Panc1 (cell line): ENCODE measurements at regions of chr20 and their contacts with region 1.

Region 1: DNA sequence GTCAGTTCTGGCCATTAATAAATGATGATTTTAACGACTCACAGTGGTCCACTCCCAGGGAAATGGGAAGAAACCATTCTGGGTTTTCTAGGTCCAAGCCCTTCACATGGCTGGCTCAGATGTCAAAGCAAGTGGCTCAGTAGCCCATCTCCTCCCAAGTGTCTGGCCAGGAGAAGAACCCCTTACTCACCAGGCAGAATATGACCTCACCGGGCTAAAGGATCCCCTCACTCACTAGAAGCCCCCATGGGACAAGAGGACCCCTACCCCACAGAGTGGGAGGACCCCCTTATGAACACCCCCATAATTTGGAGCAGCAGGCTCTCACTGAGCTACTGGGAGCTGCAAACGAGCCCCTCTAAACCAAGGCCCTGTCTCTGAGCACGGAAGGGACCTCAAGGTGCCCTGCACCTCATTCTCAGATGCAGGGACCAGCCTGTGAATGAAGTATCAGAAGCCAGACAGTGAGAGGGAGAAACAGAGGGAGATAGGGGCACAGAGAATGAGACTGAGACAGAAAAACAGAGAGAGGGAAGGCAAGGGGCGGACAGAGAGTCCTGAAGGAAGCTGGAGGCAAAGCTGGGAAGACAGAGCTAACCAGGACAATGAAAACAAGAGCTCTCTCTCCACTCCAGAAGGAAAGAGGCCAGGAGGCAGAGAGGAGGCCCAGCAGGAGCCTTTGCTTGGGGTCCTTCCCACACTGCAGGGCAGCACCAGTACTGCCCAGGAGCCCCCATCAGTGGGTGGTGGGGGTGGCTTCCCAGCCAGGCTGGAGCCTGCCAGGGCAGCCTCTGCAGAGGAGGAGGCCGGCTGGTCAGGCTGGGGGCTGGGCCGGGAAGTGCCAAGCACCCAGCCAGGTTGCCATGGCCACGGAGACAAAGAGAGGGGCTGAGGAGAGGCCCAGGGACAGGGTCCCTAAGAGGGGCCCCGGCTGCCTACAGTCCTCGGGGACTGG is 33.7 kb downstream of the PREX1 start:
- DNase-seq: no peak
- ATAC-seq: peak; percentile 43
- H3K4me3 ChIP-seq: no peak overlapping the region
- H3K27ac ChIP-seq: no peak overlapping the region
- H3K4me1 ChIP-seq: peaks cover 10% of the 10 kb centered on the region
- H3K27me3 ChIP-seq: no peaks in the 10 kb centered on the region
- CTCF ChIP-seq: no peak

Region 2: GRCh38 chr20:48769069-48769879 is 24.8 kb before region 1 on chr20:
- CTCF ChIA-PET with region 1: no interaction called
- POLR2A ChIA-PET with region 1: interaction called, 10 read pairs
- in situ Hi-C with region 1: no loop called
- intact Hi-C with region 1: no loop called
- DNase-seq: no peak
- ATAC-seq: peak; percentile 49; the same call in 1 of the 2 replicates
- H3K4me3 ChIP-seq: no peak overlapping the region
- H3K27ac ChIP-seq: no peak overlapping the region
- H3K4me1 ChIP-seq: peaks cover 5% of the 10 kb centered on the region; the same call in 1 of the 2 replicates
- H3K27me3 ChIP-seq: no peaks in the 10 kb centered on the region
- CTCF ChIP-seq: no peak

Region 3: GRCh38 chr20:48999890-49000870 is 206.1 kb after region 1 on chr20:
- CTCF ChIA-PET with region 1: no interaction called
- POLR2A ChIA-PET with region 1: no interaction called
- in situ Hi-C with region 1: no loop called
- intact Hi-C with region 1: no loop called
- DNase-seq: no peak
- ATAC-seq: no peak
- H3K4me3 ChIP-seq: no peak overlapping the region
- H3K27ac ChIP-seq: no peak overlapping the region
- H3K4me1 ChIP-seq: no peaks in the 10 kb centered on the region
- H3K27me3 ChIP-seq: no peaks in the 10 kb centered on the region
- CTCF ChIP-seq: no peak